B cell (primary cell): ENCODE measurements at regions of chr20 and their contacts with region 1.

Region 1: DNA sequence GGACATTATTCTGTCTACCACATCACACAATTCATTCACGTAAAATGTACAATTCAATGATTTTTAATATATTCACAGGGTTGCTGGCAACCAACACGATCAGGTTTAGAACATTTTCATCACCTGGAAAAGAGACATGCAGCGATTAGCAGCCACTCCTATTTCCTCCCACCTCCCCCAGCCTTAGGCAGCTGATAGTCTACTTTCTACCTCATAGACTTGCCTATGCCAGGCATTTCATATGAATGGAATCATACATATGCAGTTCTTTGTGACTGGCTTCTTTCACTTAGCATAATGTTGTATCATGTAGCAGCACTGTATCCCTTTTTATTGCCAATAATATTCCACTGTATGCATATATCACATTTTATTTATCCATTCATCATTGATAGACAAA is 31.5 kb upstream of the CTNNBL1 start:
- DNase-seq: no peak
- ATAC-seq: no peak
- H3K4me3 ChIP-seq: no peak overlapping the region
- H3K4me3 Mint-ChIP-seq: no peak overlapping the region
- H3K27ac ChIP-seq: no peak overlapping the region
- H3K27ac Mint-ChIP-seq: no peak overlapping the region
- H3K4me1 ChIP-seq: no peaks in the 10 kb centered on the region
- H3K4me1 Mint-ChIP-seq: peaks cover 6% of the 10 kb centered on the region
- H3K27me3 ChIP-seq: no peaks in the 10 kb centered on the region
- H3K27me3 Mint-ChIP-seq: peaks cover 15% of the 10 kb centered on the region
- CTCF ChIP-seq: no peak

Region 2: DNA sequence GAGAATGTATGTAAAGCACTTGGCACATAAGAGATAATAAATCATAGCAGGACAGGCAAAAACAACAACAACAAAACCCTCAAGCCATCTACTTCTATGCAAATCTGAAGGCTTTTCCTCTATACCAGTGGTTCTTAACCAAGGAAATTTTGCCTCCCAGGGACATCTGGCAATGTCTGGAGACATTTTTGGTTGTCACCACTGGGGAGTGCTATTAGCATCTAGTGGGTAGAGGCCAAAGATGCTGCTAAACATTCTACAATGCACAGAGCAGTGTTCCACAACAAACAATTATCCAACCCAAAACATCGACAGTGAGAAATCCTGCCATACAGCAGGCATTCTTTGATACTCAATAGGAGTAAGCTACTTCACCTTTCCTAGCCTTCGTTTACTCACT is 944.7 kb before region 1 on chr20:
- CTCF ChIA-PET with region 1: no interaction called
- POLR2A ChIA-PET with region 1: no interaction called
- intact Hi-C with region 1: no loop called
- DNase-seq: peak; percentile 30
- ATAC-seq: no peak
- H3K4me3 ChIP-seq: no peak overlapping the region
- H3K4me3 Mint-ChIP-seq: no peak overlapping the region
- H3K27ac ChIP-seq: no peak overlapping the region
- H3K27ac Mint-ChIP-seq: no peak overlapping the region
- H3K4me1 ChIP-seq: no peaks in the 10 kb centered on the region
- H3K4me1 Mint-ChIP-seq: no peaks in the 10 kb centered on the region
- H3K27me3 ChIP-seq: no peaks in the 10 kb centered on the region
- H3K27me3 Mint-ChIP-seq: no peaks in the 10 kb centered on the region
- CTCF ChIP-seq: peak; percentile 30

Region 3: DNA sequence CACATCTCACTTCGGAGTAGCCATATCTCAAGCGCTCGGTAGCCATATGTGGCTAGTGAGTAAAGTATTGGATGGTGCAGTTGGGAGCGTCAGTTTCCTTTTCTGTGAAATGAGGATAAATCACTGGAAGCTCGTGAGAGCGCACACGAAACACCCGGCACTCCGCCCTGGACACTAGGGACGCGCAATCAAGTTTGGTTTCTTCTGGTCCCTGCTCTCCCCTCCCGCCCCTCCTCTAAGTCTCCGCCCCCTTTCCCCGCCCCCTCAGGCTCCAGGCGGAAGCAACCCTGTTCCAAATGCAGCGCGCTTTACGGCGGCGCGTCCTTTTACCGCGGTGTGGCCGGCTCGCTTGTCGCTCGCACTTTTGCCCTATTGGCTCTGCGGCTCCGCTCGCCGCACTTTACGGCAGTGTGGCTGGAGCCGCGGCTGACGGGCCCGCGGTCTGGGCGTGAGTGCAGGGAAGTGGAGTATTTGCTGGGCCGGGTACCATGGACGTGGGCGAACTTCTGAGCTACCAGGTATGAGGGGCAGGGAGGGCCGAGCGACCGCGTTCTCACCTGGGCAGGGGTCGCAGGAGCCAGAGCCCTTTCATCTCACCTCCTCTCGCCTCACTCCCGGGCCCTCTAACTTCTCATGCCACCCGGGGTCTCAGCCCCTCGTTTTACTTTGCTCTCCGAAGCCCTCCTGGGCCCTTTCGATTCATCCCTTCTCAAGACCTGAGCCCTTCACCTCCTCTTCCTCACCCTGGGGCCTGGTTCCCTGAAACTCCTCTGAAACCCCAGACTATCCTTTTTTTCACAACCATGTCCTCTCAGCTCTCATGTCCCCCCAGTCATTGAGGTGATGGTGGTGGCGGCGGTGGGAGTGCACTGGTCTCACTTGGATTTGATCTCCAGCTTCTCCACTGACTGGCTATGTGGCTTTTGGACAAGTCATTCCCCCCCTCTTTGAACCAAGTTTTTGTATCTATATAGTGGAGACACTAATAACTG is 31.6 kb after region 1 on chr20 and contains the start of gene CTNNBL1:
- CTCF ChIA-PET with region 1: no interaction called
- POLR2A ChIA-PET with region 1: no interaction called
- intact Hi-C with region 1: no loop called
- DNase-seq: peak; percentile 97
- ATAC-seq: peak; percentile 94
- H3K4me3 ChIP-seq: peak within 1 kb of the TSS; percentile 61 to 97 (median 67)
- H3K4me3 Mint-ChIP-seq: peak within 1 kb of the TSS; percentile 99
- H3K27ac ChIP-seq: peak within 1 kb of the TSS; percentile 7 to 75
- H3K27ac Mint-ChIP-seq: peak within 1 kb of the TSS; percentile 94
- H3K4me1 ChIP-seq: peaks cover 23 to 31% of the 10 kb centered on the region in 2 donors
- H3K4me1 Mint-ChIP-seq: peaks cover 45% of the 10 kb centered on the region
- H3K27me3 ChIP-seq: peaks cover 0 to 8% (median 6%) of the 10 kb centered on the region in 4 experiments
- H3K27me3 Mint-ChIP-seq: peaks cover 8% of the 10 kb centered on the region
- CTCF ChIP-seq: no peak
- total RNA-seq, gene CTNNBL1: 64.7 and 64.8 TPM in 2 replicates

Region 4: DNA sequence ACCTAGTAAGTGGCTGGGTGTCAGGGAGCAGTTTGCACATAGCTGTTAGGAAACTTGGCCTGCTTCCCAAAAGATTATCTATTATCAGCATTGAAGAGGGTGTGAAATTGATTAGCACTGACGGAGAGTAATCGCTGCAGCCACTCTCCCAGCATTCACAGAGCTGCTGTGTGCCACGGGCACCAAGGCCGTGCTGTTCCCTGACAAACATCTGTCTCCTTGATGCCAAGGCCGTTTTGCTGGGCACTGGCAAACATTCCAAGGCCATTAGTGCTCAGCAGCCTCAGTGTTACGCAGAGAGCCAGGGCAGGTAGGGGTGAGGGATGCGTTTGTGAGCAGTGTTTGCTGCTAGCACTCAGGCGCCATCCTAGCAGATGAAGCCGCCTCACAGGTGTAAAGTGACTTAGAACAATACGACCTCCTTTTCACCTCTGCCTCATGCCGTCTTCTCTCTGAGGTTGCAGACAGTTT is 183.0 kb after region 1 on chr20:
- CTCF ChIA-PET with region 1: no interaction called
- POLR2A ChIA-PET with region 1: no interaction called
- intact Hi-C with region 1: loop called (anchors 5 kb)
- DNase-seq: no peak
- ATAC-seq: no peak
- H3K4me3 ChIP-seq: no peak overlapping the region
- H3K4me3 Mint-ChIP-seq: no peak overlapping the region
- H3K27ac ChIP-seq: no peak overlapping the region
- H3K27ac Mint-ChIP-seq: no peak overlapping the region
- H3K4me1 ChIP-seq: no peaks in the 10 kb centered on the region
- H3K4me1 Mint-ChIP-seq: no peaks in the 10 kb centered on the region
- H3K27me3 ChIP-seq: no peaks in the 10 kb centered on the region
- H3K27me3 Mint-ChIP-seq: no peaks in the 10 kb centered on the region
- CTCF ChIP-seq: no peak